Heart right ventricle (tissue), 16 donors: ENCODE measurements at regions of chr13 and their contacts with region 1.

Region 1: GRCh38 chr13:80840316-80840976 is 499.5 kb upstream of the SPRY2 start:
- DNase-seq: no peak
- ATAC-seq: peak in 7 of 8 donors; percentile 37 to 83 (median 74)
- H3K4me3 ChIP-seq: peak overlapping the region in 1 of 10 donors; percentile 5
- H3K27ac ChIP-seq: peak overlapping the region in 6 of 10 donors; percentile 13 to 46 (median 27)
- H3K4me1 ChIP-seq: peaks cover 0 to 11% (median 0%) of the 10 kb centered on the region in 9 donors
- H3K27me3 ChIP-seq: no peaks in the 10 kb centered on the region
- CTCF ChIP-seq: no peak

Region 2: DNA sequence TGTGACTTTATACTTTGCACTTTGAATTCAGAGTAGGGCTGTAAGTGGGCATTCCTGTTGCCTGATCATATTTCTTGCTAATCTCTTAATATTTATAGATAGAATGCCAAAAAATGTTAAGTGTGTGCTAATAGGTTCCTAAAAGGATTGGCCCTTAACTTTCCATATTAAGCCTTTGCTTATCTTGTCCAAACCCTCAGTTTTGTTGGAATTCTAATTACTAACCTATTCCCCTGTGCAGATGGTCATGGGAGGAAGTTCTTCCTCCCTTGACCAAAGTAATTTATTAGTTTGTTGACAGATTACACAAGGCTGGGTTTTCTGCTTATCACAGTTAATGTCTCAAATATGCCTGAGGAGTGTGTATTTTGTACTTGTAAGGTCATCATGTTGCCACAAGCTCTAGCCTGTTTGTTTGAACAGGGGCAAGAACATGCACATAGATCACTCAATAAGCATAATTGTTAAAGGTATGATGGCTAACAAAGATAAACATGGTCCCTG is 41.5 kb after region 1 on chr13:
- intact Hi-C with region 1: loop called in 1 of 10 experiments (anchors 5 kb)
- DNase-seq: no peak
- ATAC-seq: peak in 4 of 8 donors; percentile 24 to 65 (median 34)
- H3K4me3 ChIP-seq: no peak overlapping the region
- H3K27ac ChIP-seq: peak overlapping the region in 1 of 10 donors; percentile 44
- H3K4me1 ChIP-seq: peaks cover 0 to 4% (median 0%) of the 10 kb centered on the region in 9 donors
- H3K27me3 ChIP-seq: no peaks in the 10 kb centered on the region
- CTCF ChIP-seq: no peak